Ascending aorta (tissue), 2 donors: ENCODE measurements at regions of chr5 and their contacts with region 1.

Region 1: DNA sequence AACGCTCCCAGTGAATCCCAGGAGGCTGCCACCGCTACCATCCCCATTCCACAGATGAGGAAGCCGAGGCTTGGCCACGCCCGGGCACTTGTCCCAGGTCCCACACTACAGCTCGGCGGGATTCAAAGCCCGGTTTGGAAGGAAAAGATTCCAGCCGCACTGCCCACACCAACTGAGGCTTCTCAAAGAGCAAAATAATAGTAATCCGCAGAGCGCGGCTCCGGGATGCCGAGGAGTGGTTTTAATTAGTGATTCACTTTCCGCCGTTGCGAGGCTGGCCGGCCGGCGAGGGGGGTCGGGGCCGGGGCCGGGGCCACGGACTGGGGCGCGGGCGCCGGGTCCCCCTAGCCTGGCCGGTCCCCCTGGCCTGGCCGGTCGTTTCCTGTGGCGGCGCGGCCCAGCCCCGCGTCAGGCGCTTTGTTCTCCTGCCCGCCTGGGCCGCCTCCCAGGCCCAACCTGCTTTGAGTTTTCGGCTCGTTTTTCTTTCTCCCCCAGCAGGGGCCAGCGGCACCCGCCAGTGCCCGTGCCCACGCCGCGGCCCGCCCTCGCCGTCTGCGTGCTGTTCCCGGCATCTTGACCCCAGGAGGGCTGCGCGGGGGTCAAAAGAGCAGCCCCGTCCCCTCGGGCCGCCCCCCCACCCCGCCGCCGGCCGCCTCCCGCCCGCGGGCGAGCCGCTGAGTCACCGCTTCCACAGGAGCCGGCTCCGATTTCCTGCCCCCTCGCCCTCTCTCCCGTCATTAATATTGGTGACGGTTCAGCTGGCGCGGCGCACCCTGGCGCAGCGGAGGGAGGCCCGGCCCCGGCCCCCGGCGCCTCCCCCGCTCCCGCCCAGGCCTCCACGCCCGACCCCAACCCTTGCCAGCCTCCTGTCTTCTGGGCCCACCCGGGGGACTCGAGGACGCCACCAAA is 31.2 kb downstream of the FGF18 start:
- DNase-seq: peak; percentile 20 to 88
- H3K4me3 ChIP-seq: peak overlapping the region; percentile 68 to 70
- H3K27ac ChIP-seq: peak overlapping the region; percentile 88 to 93
- H3K4me1 ChIP-seq: peaks cover 0 to 12% of the 10 kb centered on the region in 2 donors
- H3K27me3 ChIP-seq: no peaks in the 10 kb centered on the region
- CTCF ChIP-seq: no peak

Region 2: DNA sequence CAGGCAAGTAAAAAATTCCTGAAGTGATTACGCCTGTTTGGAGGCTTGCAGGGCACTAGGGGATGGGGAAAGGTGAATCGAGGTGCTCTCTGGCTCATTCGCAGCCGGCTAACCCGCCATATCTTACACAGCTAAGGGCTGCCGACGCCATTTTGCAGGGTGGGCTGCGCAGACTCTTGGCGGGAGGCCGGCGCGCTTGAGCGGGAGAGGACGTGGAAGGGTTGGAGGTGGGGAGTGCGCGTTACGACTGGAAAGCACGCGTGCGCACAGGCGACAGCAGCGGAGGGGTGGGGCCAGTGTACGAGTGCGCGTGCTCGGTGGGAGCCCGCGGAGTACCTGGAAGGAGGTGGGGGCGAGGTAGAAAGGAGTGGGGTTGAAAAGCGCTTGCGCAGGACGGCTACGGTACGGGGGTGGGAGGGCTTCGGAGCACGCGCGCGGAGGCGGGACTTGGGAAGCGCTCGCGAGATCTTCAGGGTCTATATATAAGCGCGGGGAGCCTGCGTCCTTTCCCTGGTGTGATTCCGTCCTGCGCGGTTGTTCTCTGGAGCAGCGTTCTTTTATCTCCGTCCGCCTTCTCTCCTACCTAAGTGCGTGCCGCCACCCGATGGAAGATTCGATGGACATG is 63.2 kb before region 1 on chr5 and contains the start of gene NPM1:
- intact Hi-C with region 1: loop called (anchors 1 kb)
- DNase-seq: peak; percentile 78 to 97
- H3K4me3 ChIP-seq: peak within 1 kb of the TSS; percentile 68 to 94
- H3K27ac ChIP-seq: peak within 1 kb of the TSS; percentile 87 to 88
- H3K4me1 ChIP-seq: peaks cover 0 to 18% of the 10 kb centered on the region in 2 donors
- H3K27me3 ChIP-seq: no peaks in the 10 kb centered on the region
- CTCF ChIP-seq: no peak
- total RNA-seq, gene NPM1: 269 TPM

Region 3: DNA sequence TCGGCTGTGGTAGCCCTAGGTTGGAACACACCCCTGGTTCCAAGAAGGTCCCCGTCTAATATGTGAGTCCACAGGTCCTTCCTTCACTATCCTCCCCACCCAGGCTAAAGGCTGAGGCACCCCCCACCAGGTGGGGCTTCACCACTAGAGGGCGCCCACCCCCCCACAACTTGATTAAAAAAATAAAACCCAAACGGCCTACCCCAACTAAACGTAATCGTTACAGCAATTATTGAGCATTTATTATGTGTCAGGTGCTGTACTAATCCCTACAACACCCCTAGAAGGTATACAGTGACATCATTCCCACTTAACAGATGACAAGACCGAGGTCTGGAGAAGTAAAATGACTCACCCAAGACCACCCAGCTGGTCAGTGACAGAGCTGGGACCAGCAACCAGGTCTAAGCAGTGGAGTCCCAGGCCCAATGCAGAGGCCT is 33.8 kb after region 1 on chr5:
- intact Hi-C with region 1: loop called (anchors 2 kb)
- DNase-seq: no peak
- H3K4me3 ChIP-seq: no peak overlapping the region
- H3K27ac ChIP-seq: peak overlapping the region in 1 of 2 donors; percentile 72
- H3K4me1 ChIP-seq: peaks cover 0 to 5% of the 10 kb centered on the region in 2 donors
- H3K27me3 ChIP-seq: no peaks in the 10 kb centered on the region
- CTCF ChIP-seq: peak; percentile 56 to 73 (median 64)

Region 4: DNA sequence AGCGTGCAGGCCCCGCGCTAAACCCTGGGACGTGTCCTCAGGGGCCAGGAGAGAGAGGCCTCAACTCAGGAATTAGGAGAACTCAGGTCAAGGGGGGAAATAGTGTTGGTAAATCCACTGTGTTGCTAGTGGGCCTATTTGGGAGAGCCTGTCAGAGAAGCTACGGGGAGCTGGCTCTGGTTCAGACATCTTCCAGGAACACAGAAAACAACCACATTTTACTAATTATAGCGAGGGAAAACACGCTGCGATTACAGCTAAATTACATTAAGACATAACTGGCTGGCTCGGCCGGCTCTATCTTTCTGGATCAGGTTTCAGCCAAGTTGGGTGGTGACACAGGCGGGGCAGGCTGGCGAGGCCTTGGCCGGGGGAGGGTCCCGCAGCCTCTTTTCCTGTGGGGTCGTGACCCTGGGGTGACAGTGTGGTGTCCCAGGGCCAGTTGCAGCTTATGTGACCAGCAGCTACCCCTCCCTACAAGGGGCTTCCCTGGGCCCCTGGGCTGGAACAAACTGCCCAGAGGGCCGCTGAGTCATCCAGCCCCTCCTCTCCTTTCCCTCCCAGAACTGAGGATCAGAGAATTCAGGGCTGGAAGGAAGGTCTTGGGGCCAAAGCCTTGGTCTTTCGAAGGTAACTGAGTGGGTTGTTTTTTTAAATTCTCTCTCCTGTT is 43.9 kb after region 1 on chr5:
- intact Hi-C with region 1: loop called (anchors 2 kb)
- DNase-seq: peak; percentile 35 to 86
- H3K4me3 ChIP-seq: peak overlapping the region in 1 of 2 donors; percentile 37
- H3K27ac ChIP-seq: peak overlapping the region; percentile 85 to 88
- H3K4me1 ChIP-seq: peaks cover 7 to 30% of the 10 kb centered on the region in 2 donors
- H3K27me3 ChIP-seq: no peaks in the 10 kb centered on the region
- CTCF ChIP-seq: no peak

Region 5: GRCh38 chr5:171521219-171521633 is 70.5 kb after region 1 on chr5:
- intact Hi-C with region 1: loop called (anchors 2 kb)
- DNase-seq: peak in 1 of 2 donors; percentile 92
- H3K4me3 ChIP-seq: no peak overlapping the region
- H3K27ac ChIP-seq: peak overlapping the region; percentile 57 to 67
- H3K4me1 ChIP-seq: peaks cover 10 to 20% of the 10 kb centered on the region in 2 donors
- H3K27me3 ChIP-seq: no peaks in the 10 kb centered on the region
- CTCF ChIP-seq: peak in 1 of 3 experiments; percentile 6

Region 6: DNA sequence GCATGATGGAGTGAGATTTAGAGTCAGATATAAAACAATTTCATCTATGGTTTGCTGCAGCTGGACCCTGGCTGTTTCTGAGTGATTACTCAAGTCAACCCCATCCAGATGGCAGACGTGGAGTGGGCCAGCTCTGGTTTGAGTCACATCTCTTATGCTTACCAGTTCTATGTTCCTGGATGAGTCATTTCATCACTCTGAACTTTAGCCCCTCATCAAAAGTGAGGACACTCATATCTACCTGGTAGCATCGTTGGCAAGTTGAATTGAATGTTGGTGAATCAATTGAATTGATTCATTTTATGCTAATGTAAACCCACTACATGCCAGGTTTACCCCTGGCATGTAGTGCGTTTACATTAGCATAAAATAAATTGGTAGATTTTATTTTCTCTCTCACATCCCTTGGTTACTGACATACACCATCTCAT is 145.1 kb after region 1 on chr5:
- intact Hi-C with region 1: loop called (anchors 5 kb)
- DNase-seq: peak; percentile 22 to 75
- H3K4me3 ChIP-seq: peak overlapping the region in 1 of 2 donors; percentile 7
- H3K27ac ChIP-seq: peak overlapping the region; percentile 65 to 68
- H3K4me1 ChIP-seq: peaks cover 5 to 12% of the 10 kb centered on the region in 2 donors
- H3K27me3 ChIP-seq: no peaks in the 10 kb centered on the region
- CTCF ChIP-seq: no peak